Endothelial cell of umbilical vein (primary cell): ENCODE measurements at regions of chr15 and their contacts with region 1.

Region 1: DNA sequence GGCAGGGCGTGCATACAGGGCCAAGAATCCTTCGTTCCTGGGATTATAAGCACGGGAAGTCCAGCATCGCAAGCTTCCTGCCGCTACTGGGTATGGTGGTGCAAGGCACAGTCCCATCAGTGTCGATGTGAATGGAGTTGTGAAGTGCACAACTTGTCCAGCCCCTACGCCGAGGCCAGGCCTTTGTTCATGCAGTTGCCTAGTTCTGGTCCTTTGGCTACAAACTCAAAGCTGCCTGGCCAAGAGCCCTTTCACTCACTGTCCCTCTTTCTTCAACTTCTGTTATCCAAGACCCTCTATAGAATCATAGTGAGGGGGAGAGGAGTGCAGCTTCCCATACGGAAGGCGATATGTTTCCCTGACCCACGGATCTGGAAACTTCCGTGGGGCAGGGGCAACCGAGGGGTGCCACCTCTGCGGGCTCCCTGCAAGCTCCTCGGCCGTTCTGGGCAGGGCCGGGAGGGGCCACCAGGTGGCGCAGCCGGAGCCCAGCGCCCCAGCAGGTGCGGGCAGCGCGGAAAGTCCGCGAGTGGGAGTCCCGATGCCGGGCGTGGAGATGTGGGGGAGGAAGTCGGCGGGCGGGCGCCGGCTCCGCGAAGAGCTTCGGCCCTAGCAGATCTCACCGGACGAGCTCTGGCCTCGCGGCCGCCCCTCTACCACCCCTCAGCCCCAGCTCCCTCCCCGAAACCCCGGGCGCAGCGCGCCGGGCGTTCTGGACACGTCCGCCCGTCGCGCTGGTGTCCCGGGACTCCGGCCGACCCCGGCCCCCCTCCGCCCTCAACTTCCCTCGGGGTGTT is 693 bp downstream of the RASGRP1 start:
- DNase-seq: peak; percentile 48
- H3K4me3 ChIP-seq: peak overlapping the region; percentile 15 to 61 (median 44)
- H3K27ac ChIP-seq: no peak overlapping the region
- H3K4me1 ChIP-seq: no peaks in the 10 kb centered on the region
- H3K27me3 ChIP-seq: peaks cover 34 to 54% of the 10 kb centered on the region in 2 experiments
- CTCF ChIP-seq: peak; percentile 83 to 95
- POLR2A ChIP-seq: no peak

Region 2: DNA sequence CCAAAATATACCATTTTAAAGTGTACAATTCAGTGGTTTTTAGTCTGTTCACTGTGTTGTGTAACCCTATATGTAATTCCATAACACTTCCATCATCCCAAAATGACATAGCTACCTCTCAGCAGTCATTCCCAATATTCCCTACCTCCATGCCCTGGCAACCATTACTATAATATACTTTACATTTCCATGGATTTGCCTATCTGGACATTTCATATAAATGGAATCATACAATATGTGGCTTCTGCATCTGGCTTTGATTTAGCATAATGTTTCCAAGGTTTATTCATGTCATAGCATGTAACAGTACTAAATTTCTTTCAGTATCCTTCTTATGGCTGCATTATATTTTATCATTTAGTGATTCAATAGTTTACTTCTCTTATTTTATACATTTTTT is 84.7 kb before region 1 on chr15:
- CTCF ChIA-PET with region 1: interaction called, 22 read pairs
- POLR2A ChIA-PET with region 1: no interaction called
- dilution Hi-C with region 1: no loop called
- intact Hi-C with region 1: no loop called
- DNase-seq: peak; percentile 5
- H3K4me3 ChIP-seq: no peak overlapping the region
- H3K27ac ChIP-seq: peak overlapping the region; percentile 60
- H3K4me1 ChIP-seq: peaks cover 19% of the 10 kb centered on the region
- H3K27me3 ChIP-seq: no peaks in the 10 kb centered on the region
- CTCF ChIP-seq: no peak
- POLR2A ChIP-seq: no peak

Region 3: DNA sequence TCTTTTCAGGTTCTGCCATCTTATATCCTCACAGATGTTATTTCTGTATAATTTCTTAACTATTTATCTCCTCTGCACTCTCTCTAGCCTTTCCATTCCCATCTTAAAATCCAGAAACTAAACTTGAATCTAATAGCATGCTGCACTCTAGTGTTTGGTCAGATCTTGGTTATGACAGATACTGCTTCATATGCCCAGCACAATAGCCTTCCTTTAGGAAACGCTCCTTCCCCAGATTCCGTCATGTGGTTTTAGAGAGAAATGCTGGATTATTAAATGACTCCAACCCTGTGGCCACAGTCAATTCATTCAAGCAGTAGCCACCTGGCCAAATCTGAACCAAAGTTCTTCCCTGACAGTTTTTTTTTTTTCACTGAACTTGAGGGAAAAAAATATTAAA is 18.7 kb before region 1 on chr15:
- CTCF ChIA-PET with region 1: interaction called, 14 read pairs
- POLR2A ChIA-PET with region 1: no interaction called
- dilution Hi-C with region 1: no loop called
- intact Hi-C with region 1: no loop called
- DNase-seq: no peak
- H3K4me3 ChIP-seq: no peak overlapping the region
- H3K27ac ChIP-seq: no peak overlapping the region
- H3K4me1 ChIP-seq: no peaks in the 10 kb centered on the region
- H3K27me3 ChIP-seq: peaks cover 12 to 25% of the 10 kb centered on the region in 2 experiments
- CTCF ChIP-seq: no peak
- POLR2A ChIP-seq: no peak

Region 4: GRCh38 chr15:38600236-38600635 is 36.3 kb after region 1 on chr15:
- CTCF ChIA-PET with region 1: interaction called, 12 read pairs
- POLR2A ChIA-PET with region 1: no interaction called
- dilution Hi-C with region 1: no loop called
- intact Hi-C with region 1: no loop called
- DNase-seq: no peak
- H3K4me3 ChIP-seq: no peak overlapping the region
- H3K27ac ChIP-seq: no peak overlapping the region
- H3K4me1 ChIP-seq: no peaks in the 10 kb centered on the region
- H3K27me3 ChIP-seq: peaks cover 10 to 11% of the 10 kb centered on the region in 2 experiments
- CTCF ChIP-seq: no peak
- POLR2A ChIP-seq: no peak

Region 5: GRCh38 chr15:38647683-38648082 is 83.8 kb after region 1 on chr15:
- CTCF ChIA-PET with region 1: interaction called, 17 read pairs
- POLR2A ChIA-PET with region 1: no interaction called
- dilution Hi-C with region 1: no loop called
- intact Hi-C with region 1: no loop called
- DNase-seq: peak; percentile 11
- H3K4me3 ChIP-seq: no peak overlapping the region
- H3K27ac ChIP-seq: no peak overlapping the region
- H3K4me1 ChIP-seq: no peaks in the 10 kb centered on the region
- H3K27me3 ChIP-seq: peaks cover 11 to 15% of the 10 kb centered on the region in 2 experiments
- CTCF ChIP-seq: peak in 1 of 2 donors; percentile 7
- POLR2A ChIP-seq: no peak

Region 6: DNA sequence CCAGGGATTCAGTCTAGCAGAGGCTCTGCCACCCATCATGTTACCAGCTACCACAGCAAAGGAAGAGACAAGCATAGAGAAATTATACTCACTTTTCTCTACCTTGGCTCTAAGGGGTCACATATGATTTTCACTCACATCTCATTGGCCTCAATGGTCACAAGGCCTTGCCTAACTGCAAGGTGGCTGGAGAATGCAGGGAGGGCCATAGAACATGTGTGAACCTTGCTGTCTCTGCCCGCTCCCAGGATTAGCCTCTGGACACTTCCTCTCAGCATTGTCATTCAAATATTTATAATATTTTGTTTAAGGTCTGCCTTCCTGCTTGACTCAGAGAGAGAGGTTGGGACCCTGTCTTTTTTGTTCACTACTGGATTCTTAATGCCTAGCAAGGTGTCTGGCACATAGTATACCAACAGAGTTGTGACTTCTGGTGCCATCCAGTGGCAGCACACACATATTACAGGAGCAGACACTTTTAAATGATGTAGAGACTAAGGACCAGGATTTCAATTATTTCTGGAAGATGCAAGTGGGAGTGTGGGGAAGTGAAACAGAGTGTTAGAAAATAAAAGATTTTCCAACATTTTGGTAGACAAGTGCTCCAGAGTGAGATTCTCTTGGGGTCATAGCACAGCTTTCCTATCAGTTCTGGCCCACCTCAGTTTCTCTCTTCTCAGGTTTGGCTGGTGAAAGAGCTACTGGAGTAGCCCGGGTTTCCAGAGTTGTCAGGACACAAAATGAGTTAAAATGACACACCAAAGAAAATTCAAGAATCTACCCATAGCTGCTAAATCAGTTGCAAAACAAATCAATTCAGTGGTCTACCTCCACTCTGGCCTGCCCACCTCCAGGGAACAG is 119.7 kb after region 1 on chr15:
- CTCF ChIA-PET with region 1: interaction called, 137 read pairs
- POLR2A ChIA-PET with region 1: no interaction called
- dilution Hi-C with region 1: no loop called
- intact Hi-C with region 1: loop called (anchors 1 kb)
- DNase-seq: peak; percentile 59
- H3K4me3 ChIP-seq: no peak overlapping the region
- H3K27ac ChIP-seq: no peak overlapping the region
- H3K4me1 ChIP-seq: no peaks in the 10 kb centered on the region
- H3K27me3 ChIP-seq: peaks cover 17 to 20% of the 10 kb centered on the region in 2 experiments
- CTCF ChIP-seq: peak; percentile 63 to 64
- POLR2A ChIP-seq: no peak